ENCODE measurements at regions of chr10 and their contacts with region 1.

Region 1: DNA sequence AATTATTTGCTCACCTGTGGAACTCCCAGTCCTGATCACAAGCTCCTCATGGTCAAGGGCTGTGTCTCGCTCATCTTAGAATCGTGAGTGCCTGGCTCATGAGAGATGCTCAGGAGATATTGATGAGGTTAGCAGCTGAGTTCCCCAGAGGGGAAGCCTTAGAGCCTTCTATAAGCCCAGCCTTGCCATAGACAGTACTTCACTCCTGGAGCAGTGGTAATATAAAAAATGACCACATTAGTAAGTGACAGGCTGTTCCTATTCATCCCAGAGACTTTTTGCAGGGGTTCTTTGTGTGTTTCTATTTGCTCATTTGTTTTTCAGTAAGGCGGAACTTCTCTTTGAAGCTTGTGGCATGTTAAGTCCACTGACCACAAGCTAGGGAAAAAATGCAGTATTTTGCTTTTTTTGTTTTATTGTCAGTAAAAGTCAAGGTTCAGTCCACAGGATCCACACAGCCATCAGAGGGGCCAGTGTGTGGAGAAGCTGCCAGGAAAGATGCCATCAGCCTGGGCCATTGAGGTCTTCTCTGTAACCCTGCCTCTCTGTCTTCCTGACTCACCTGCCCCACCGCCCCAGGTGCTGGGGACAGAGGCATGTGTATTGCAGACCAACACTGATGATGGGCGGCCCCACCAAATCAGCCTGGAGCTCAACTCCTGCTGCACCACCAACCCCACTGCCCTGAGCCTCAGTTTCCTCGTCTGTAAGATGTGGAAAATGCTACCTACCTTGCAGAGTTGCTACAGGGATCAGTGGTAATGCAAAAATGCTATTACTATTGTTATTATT is 36.4 kb upstream of the JCAD start:
- DNase-seq: no peak
- ATAC-seq: no peak
- H3K4me3 ChIP-seq: no peak overlapping the region
- H3K4me3 Mint-ChIP-seq: no peak overlapping the region
- H3K27ac ChIP-seq: no peak overlapping the region
- H3K27ac Mint-ChIP-seq: no peak overlapping the region
- H3K4me1 ChIP-seq: no peaks in the 10 kb centered on the region
- H3K4me1 Mint-ChIP-seq: no peaks in the 10 kb centered on the region
- H3K27me3 ChIP-seq: peaks cover 0 to 7% of the 10 kb centered on the region in 2 experiments
- H3K27me3 Mint-ChIP-seq: peaks cover 27 to 36% of the 10 kb centered on the region in 2 donors

Region 2: DNA sequence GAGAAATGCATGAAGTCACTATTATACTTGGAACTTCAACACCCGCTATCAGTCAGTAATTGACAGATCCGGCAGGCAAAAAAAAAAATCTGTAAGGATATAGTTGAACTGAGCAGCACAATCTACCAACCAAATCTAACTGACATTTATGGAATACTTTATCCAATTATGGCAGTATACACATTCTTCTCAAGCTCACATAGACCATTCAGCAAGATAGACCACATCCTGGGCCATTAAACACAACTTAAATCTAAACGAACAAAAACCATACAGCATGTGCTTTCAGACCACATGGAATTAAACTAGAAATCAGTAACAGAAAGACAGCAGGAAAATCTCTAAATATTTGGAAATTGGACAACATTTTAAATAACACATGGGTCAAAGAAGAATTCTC is 1905.6 kb before region 1 on chr10:
- CTCF ChIA-PET with region 1: interaction called in 1 of 2 experiments, 14 read pairs
- POLR2A ChIA-PET with region 1: no interaction called
- DNase-seq: no peak
- ATAC-seq: no peak
- H3K4me3 ChIP-seq: no peak overlapping the region
- H3K4me3 Mint-ChIP-seq: no peak overlapping the region
- H3K27ac ChIP-seq: no peak overlapping the region
- H3K27ac Mint-ChIP-seq: no peak overlapping the region
- H3K4me1 ChIP-seq: no peaks in the 10 kb centered on the region
- H3K4me1 Mint-ChIP-seq: peaks cover 38 to 42% (median 40%) of the 10 kb centered on the region in 3 donors
- H3K27me3 ChIP-seq: no peaks in the 10 kb centered on the region
- H3K27me3 Mint-ChIP-seq: no peaks in the 10 kb centered on the region

Region 3: GRCh38 chr10:29712108-29712507 is 383.7 kb before region 1 on chr10:
- CTCF ChIA-PET with region 1: no interaction called
- POLR2A ChIA-PET with region 1: no interaction called
- DNase-seq: no peak
- ATAC-seq: no peak
- H3K4me3 ChIP-seq: no peak overlapping the region
- H3K4me3 Mint-ChIP-seq: no peak overlapping the region
- H3K27ac ChIP-seq: no peak overlapping the region
- H3K27ac Mint-ChIP-seq: no peak overlapping the region
- H3K4me1 ChIP-seq: peaks cover 0 to 2% of the 10 kb centered on the region in 2 experiments
- H3K4me1 Mint-ChIP-seq: peaks cover 38 to 56% (median 44%) of the 10 kb centered on the region in 3 donors
- H3K27me3 ChIP-seq: no peaks in the 10 kb centered on the region
- H3K27me3 Mint-ChIP-seq: no peaks in the 10 kb centered on the region

Region 4: GRCh38 chr10:30080161-30080560 is 15.7 kb before region 1 on chr10:
- CTCF ChIA-PET with region 1: no interaction called
- POLR2A ChIA-PET with region 1: no interaction called
- DNase-seq: no peak
- ATAC-seq: no peak
- H3K4me3 ChIP-seq: no peak overlapping the region
- H3K4me3 Mint-ChIP-seq: no peak overlapping the region
- H3K27ac ChIP-seq: no peak overlapping the region
- H3K27ac Mint-ChIP-seq: no peak overlapping the region
- H3K4me1 ChIP-seq: no peaks in the 10 kb centered on the region
- H3K4me1 Mint-ChIP-seq: no peaks in the 10 kb centered on the region
- H3K27me3 ChIP-seq: peaks cover 0 to 10% of the 10 kb centered on the region in 2 experiments
- H3K27me3 Mint-ChIP-seq: peaks cover 39 to 43% of the 10 kb centered on the region in 2 donors